Calu3 (cell line): ENCODE measurements at regions of chr9 and their contacts with region 1.

Region 1: DNA sequence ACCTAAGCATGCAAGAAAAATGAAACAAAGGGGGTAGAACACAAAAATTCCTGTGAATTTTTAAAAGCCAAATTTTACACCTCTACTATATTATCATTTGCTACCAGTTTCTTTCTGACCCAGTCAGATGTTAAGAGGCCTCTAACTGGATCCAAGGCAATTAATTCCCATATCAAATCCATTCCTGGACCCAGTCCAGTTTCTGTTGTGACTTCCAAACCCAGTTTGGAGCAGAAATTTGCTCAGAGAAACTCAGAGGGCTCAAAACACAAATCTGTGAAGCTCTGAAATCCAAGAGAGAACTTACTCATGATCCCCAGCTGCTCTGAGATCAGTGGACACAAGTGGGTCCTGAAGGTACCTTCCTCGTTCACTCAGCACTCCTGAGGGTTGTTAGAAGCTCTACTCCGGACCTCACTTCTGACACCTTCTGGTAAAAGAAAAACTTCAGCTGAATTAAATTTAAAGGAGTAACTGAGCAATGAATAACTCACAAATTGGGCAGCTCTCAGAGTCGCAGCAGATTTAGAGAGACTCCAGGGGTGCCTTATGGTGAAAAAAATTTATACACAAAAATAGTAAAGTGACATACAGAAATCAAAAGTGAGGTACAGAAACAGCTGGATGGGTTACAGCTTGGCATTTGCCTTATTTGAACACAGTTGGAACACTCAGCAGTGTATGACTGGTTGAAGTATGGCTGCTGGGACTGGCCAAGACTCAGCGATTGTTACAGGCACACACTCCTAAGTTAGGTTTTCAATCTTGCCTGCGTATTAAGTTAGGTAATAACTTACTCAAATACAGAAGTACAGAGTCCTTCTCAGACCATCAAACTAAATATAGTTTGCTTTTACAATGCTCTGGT is 32.4 kb downstream of the INSL4 start:
- DNase-seq: peak; percentile 7
- H3K4me3 Mint-ChIP-seq: no peak overlapping the region
- H3K27ac Mint-ChIP-seq: no peak overlapping the region
- H3K4me1 Mint-ChIP-seq: peaks cover 13% of the 10 kb centered on the region
- H3K27me3 Mint-ChIP-seq: no peaks in the 10 kb centered on the region
- CTCF ChIP-seq: no peak

Region 2: DNA sequence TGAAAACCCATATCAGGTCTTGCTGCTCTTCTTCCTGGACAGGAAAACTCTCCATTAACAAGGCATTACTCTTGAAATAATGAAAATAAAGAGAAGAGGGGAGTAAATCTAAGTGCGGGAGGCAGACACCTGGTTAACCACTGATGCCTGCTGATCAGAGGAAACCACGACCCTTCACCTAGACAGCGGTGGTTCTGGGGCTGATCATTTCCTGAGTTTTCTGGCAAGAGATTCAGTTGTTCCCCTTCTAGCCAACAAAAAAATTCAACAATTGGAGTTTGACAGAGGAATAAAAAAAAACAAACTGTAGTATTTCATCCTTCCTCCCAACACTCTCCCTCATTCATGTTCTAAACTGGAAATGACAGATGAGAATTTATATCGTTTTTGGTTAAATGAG is 38.0 kb after region 1 on chr9:
- CTCF ChIA-PET with region 1: no interaction called
- intact Hi-C with region 1: no loop called
- DNase-seq: no peak
- H3K4me3 Mint-ChIP-seq: no peak overlapping the region
- H3K27ac Mint-ChIP-seq: no peak overlapping the region
- H3K4me1 Mint-ChIP-seq: no peaks in the 10 kb centered on the region
- H3K27me3 Mint-ChIP-seq: no peaks in the 10 kb centered on the region
- CTCF ChIP-seq: no peak

Region 3: GRCh38 chr9:5425006-5425628 is 161.5 kb after region 1 on chr9:
- CTCF ChIA-PET with region 1: no interaction called
- intact Hi-C with region 1: loop called (anchors 10 kb)
- DNase-seq: no peak
- H3K4me3 Mint-ChIP-seq: no peak overlapping the region
- H3K27ac Mint-ChIP-seq: no peak overlapping the region
- H3K4me1 Mint-ChIP-seq: no peaks in the 10 kb centered on the region
- H3K27me3 Mint-ChIP-seq: no peaks in the 10 kb centered on the region
- CTCF ChIP-seq: peak; percentile 38